BJ (cell line): ENCODE measurements at regions of chr12 and their contacts with region 1.

Region 1: DNA sequence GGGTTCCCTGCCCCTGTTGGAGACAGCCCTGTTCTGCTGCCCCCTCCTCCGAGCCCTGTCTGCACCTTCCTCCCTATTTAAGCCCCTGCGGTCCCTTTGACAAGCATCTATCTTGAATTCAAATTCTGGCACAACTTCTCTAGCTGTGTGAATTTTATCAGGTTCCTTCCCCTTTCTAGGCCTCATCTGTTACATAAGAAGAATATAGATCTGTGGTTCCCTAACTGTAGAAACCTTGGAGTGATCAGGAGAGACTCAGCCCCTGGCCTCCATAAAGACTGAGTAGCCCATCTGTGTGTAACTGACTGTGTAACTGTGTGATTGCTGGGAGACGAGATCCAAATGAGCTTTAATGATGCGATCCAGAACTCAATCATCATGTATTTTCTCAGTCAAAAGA is 13.0 kb upstream of the RACGAP1 start:
- DNase-seq: no peak
- H3K4me3 ChIP-seq: no peak overlapping the region
- H3K27me3 ChIP-seq: no peaks in the 10 kb centered on the region; the same call in 1 of the 2 replicates
- CTCF ChIP-seq: no peak

Region 2: GRCh38 chr12:49983892-49984291 is 54.4 kb before region 1 on chr12:
- CTCF ChIA-PET with region 1: interaction called, 77 read pairs
- POLR2A ChIA-PET with region 1: no interaction called
- DNase-seq: no peak
- H3K4me3 ChIP-seq: no peak overlapping the region
- H3K27me3 ChIP-seq: no peaks in the 10 kb centered on the region
- CTCF ChIP-seq: no peak

Region 3: GRCh38 chr12:50025187-50026059 is 12.9 kb before region 1 on chr12 and contains the start of gene RACGAP1:
- CTCF ChIA-PET with region 1: interaction called, 42 read pairs
- POLR2A ChIA-PET with region 1: interaction called, 3 read pairs
- DNase-seq: peak; percentile 87
- H3K4me3 ChIP-seq: peak within 1 kb of the TSS; percentile 65
- H3K27me3 ChIP-seq: no peaks in the 10 kb centered on the region
- CTCF ChIP-seq: no peak
- polyA plus RNA-seq, gene RACGAP1: 42.8 and 55.3 TPM in 2 replicates

Region 4: GRCh38 chr12:50050410-50051098 is 12.2 kb after region 1 on chr12:
- CTCF ChIA-PET with region 1: interaction called, 90 read pairs
- POLR2A ChIA-PET with region 1: no interaction called
- DNase-seq: no peak
- H3K4me3 ChIP-seq: peak overlapping the region; percentile 1; the same call in 1 of the 2 replicates
- H3K27me3 ChIP-seq: peaks cover 29% of the 10 kb centered on the region
- CTCF ChIP-seq: no peak